ENCODE measurements at regions of chr12 and their contacts with region 1.

Region 1: GRCh38 chr12:116609319-116610114 is 50.3 kb downstream of the MAP1LC3B2 start:
- DNase-seq: peak; percentile 57
- ATAC-seq: no peak
- H3K4me3 ChIP-seq: no peak overlapping the region
- H3K4me3 Mint-ChIP-seq: no peak overlapping the region
- H3K27ac ChIP-seq: no peak overlapping the region
- H3K27ac Mint-ChIP-seq: no peak overlapping the region
- H3K4me1 ChIP-seq: peaks cover 8 to 11% of the 10 kb centered on the region in 2 donors
- H3K4me1 Mint-ChIP-seq: peaks cover 14% of the 10 kb centered on the region
- H3K27me3 ChIP-seq: peaks cover 0 to 5% (median 0%) of the 10 kb centered on the region in 4 experiments
- H3K27me3 Mint-ChIP-seq: peaks cover 7% of the 10 kb centered on the region
- CTCF ChIP-seq: peak; percentile 50

Region 2: GRCh38 chr12:116142936-116143898 is 466.3 kb before region 1 on chr12:
- CTCF ChIA-PET with region 1: interaction called, 11 read pairs
- POLR2A ChIA-PET with region 1: no interaction called
- intact Hi-C with region 1: no loop called
- DNase-seq: no peak
- ATAC-seq: peak; percentile 36
- H3K4me3 ChIP-seq: no peak overlapping the region
- H3K4me3 Mint-ChIP-seq: peak overlapping the region; percentile 38
- H3K27ac ChIP-seq: peak overlapping the region in 1 of 2 donors; percentile 41
- H3K27ac Mint-ChIP-seq: peak overlapping the region; percentile 17
- H3K4me1 ChIP-seq: peaks cover 18 to 32% of the 10 kb centered on the region in 2 donors
- H3K4me1 Mint-ChIP-seq: peaks cover 58% of the 10 kb centered on the region
- H3K27me3 ChIP-seq: no peaks in the 10 kb centered on the region
- H3K27me3 Mint-ChIP-seq: no peaks in the 10 kb centered on the region
- CTCF ChIP-seq: no peak

Region 3: GRCh38 chr12:116624516-116624915 is 15.0 kb after region 1 on chr12:
- CTCF ChIA-PET with region 1: no interaction called
- POLR2A ChIA-PET with region 1: no interaction called
- intact Hi-C with region 1: no loop called
- DNase-seq: no peak
- ATAC-seq: no peak
- H3K4me3 ChIP-seq: no peak overlapping the region
- H3K4me3 Mint-ChIP-seq: no peak overlapping the region
- H3K27ac ChIP-seq: no peak overlapping the region
- H3K27ac Mint-ChIP-seq: no peak overlapping the region
- H3K4me1 ChIP-seq: no peaks in the 10 kb centered on the region
- H3K4me1 Mint-ChIP-seq: no peaks in the 10 kb centered on the region
- H3K27me3 ChIP-seq: peaks cover 0 to 3% (median 0%) of the 10 kb centered on the region in 4 experiments
- H3K27me3 Mint-ChIP-seq: peaks cover 15% of the 10 kb centered on the region
- CTCF ChIP-seq: no peak

Measured in B cell (primary cell).